GM10248 (cell line): ENCODE measurements at regions of chr17 and their contacts with region 1.

Region 1: DNA sequence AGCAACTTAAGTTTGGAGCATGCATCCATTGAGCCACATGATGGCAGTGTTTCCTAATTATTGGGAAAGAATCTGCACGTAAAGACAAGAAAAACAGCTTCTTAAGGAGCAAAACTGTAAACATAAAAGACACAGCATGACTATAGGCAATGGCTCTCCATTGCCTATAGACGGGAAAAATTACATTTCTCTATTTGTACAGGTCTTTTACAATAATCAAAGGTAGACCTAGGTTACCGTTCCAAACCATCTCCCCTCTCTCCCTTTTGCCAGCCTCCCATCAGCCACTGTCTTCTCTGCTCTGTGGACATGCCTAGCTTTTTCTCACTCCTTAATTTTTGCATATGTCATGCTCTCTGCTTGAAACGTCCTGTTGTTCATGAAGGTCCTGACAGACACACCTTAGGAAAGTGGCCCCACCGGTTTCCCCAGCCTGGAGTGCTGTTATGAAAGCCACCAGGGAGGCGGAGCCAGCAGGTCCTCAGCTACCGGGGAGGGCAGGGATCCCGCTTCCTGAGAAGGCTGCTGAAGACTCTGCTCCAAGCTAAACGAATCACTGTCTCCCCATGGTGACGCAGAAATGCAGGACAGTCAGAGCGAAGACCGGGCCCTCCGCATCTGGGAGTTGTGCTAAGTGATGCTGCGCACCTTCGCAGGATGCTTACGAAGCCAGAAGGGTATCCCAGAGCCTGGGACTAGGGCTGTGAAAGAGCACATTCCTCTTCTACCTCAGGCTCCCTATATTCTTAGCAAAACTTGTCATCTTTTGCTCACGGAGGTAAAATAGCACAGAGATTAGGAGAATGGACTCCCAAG is 2.2 kb upstream of the SLC16A11 start:
- DNase-seq: peak; percentile 49
- CTCF ChIP-seq: peak; percentile 78

Region 2: DNA sequence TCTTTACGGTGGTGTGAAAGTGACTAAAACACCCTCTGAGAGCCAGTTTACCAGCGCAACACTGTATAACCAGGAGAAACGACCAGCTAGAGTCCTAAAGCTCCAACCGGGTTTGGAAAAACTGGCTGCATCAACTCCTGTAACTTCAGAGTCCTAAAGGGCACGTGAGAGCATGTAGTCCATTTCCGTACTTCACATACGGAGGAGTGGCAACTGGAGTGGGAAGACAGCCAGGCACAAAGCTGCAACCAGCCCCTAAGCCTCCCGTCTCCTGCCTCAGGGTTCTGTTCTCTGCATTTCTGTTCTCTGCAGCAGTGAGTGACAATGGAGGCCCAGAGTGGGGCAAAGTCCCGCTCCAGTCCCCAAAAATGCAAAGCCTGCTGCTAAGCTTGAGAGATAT is 233.8 kb before region 1 on chr17:
- CTCF ChIA-PET with region 1: no interaction called
- POLR2A ChIA-PET with region 1: no interaction called
- DNase-seq: no peak
- CTCF ChIP-seq: no peak

Region 3: DNA sequence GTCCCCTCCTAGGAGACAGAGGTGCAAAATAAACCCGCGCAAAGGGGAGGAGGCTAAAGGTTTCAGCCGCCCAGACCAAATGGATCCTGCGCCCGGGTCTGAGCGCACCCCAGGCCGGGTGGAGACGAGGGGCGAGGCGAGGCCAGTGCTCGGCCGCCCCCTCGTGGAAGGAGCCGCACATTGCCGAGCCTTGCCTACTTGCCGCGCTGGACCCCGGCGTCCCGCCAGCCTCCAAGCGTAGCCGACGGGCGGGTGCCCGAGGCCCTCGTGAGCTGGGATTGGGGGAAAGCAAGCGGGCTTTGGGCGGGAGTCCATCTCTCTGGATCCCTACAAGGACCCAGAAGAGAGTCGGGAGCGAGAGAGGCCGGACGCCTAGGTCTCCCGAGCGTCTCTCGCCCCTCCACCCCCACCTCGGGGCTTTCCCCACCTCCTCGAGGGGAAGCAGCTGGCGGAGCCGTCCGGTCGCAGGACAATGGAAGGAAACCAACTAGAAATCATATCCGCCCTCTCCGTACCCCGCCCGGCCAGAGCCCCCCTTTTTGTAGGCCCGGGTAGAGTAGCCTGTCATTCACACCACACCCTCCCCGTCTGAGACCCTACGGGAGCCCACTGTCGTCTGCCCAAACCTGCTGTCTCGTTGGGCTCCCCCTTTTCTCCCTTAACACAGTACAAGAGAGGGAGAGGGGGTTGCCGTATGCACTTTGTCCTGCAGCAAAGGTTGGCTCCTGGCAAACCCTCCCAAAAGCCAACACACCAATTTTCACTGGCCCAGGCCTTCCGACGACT is 23.9 kb before region 1 on chr17:
- CTCF ChIA-PET with region 1: interaction called, 16 read pairs
- POLR2A ChIA-PET with region 1: no interaction called
- DNase-seq: peak; percentile 86
- CTCF ChIP-seq: peak; percentile 91

Region 4: GRCh38 chr17:7136266-7136877 is 90.3 kb after region 1 on chr17:
- CTCF ChIA-PET with region 1: interaction called, 247 read pairs
- POLR2A ChIA-PET with region 1: interaction called, 3 read pairs
- DNase-seq: peak; percentile 78
- CTCF ChIP-seq: peak; percentile 88

Region 5: GRCh38 chr17:7219812-7220581 is 173.9 kb after region 1 on chr17 and contains the starts of genes ACADVL and DLG4:
- CTCF ChIA-PET with region 1: interaction called, 15 read pairs
- POLR2A ChIA-PET with region 1: interaction called, 3 read pairs
- DNase-seq: peak; percentile 91
- CTCF ChIP-seq: no peak